Cardiac septum (tissue), 1 donor: ENCODE measurements at regions of chr17 and their contacts with region 1.

Region 1: GRCh38 chr17:3004133-3004801 is 59.1 kb downstream of the OR1D5 start:
- DNase-seq: peak; percentile 98

Region 2: DNA sequence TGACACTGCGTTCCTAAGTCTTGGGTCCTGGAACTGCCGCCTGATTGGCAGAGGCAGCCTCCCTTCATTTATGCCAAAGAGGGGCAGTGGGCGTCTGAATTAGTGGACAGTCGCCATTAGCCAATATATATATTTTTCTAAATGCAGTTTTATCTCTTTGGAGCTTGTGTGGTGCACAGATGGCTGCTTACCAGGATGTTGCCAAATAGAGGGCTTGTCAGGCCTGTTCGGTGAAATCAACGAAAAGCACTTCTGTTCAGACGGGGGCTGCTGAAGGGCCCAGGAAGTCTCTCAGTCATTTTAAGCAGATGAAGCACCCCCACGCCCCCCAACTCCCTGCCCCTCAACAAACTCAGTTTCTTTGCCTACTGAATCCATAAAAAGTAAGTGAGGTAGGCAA is 142.1 kb before region 1 on chr17:
- intact Hi-C with region 1: no loop called
- DNase-seq: no peak

Region 3: GRCh38 chr17:2874189-2874686 is 130.0 kb before region 1 on chr17:
- intact Hi-C with region 1: no loop called
- DNase-seq: no peak

Region 4: GRCh38 chr17:2929881-2930533 is 74.3 kb before region 1 on chr17:
- intact Hi-C with region 1: loop called (anchors 10 kb)
- DNase-seq: no peak

Region 5: DNA sequence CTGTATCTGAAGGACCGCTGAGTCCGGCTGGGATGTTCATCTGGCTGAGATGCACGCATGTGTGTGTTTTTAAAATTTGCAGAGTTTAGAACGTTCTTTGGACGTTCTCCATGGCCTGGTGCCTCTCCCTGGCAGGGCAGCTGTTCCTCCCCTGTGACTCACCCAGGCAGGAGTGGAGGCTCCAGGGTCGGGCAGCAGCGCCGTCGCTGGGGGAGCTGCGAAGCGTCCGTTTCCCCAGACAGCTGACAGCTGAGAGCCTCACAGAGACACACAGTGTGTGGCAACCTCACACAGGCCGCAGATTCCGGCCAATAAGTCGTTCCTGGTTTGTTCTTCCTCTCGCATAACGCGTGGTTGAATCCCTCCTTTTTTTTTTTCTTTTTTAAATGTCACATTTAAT is 21.4 kb before region 1 on chr17:
- intact Hi-C with region 1: loop called (anchors 2 kb)
- DNase-seq: peak; percentile 87

Region 6: GRCh38 chr17:3029213-3029905 is 25.1 kb after region 1 on chr17:
- intact Hi-C with region 1: loop called (anchors 2 kb)
- DNase-seq: peak; percentile 86

Region 7: DNA sequence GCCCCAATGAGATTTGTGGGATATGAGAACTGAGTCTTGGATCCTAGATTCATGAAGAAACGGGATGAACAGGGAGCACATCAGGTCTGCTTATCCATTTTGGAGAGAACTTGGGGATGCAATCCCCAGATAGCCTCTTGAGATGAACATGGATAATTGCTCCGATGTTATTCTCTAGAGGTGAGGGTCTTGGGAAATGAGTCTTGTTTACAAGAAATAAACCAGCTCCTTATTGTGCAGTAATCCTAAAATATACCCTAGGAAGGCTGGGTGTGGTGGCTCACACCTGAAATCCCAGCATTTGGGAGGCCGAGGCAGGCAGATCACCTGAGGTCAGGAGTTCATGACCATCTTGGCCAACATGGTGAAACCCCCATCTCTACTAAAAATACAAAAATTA is 100.1 kb after region 1 on chr17 and contains the start of gene OR1D2:
- intact Hi-C with region 1: no loop called
- DNase-seq: no peak
- total RNA-seq, gene OR1D2: not detected